Mammary epithelial cell (primary cell): ENCODE measurements at regions of chr3 and their contacts with region 1.

Region 1: DNA sequence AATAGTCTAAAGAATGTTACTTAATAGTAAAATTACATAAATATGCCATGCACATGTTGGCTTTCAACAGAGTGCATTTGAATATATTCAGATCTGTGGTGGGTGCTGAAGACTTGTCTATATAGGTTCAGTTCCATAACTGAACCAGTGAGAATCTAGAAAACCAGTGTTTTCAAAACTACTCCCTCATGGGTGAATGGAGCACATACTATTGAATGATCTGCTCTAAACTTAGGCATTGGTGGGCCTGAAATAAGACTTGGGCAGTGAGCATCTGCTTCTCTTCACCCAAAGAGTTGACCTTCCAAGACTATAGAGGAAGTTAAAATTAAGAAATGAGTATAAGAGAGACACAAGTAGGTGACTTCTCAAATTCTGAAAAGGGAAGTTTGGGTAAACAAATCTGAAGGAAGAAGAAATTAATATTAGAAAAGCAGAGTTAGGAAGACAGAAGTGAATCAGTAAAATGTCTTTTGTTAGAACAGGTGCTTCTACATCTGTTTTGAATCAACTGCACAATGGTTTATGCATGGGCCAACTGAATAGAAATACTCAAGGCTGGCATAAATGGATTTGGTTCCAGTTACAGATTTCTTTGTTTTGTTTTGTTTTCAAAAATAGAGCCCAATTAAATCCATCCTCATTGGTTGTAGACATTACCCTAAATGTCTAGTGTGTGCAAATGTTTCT is 19.3 kb downstream of the ALCAM start:
- DNase-seq: no peak
- H3K4me3 ChIP-seq: no peak overlapping the region
- H3K27ac ChIP-seq: peak overlapping the region; percentile 83
- H3K4me1 ChIP-seq: peaks cover 14% of the 10 kb centered on the region
- H3K27me3 ChIP-seq: no peaks in the 10 kb centered on the region
- CTCF ChIP-seq: no peak

Region 2: DNA sequence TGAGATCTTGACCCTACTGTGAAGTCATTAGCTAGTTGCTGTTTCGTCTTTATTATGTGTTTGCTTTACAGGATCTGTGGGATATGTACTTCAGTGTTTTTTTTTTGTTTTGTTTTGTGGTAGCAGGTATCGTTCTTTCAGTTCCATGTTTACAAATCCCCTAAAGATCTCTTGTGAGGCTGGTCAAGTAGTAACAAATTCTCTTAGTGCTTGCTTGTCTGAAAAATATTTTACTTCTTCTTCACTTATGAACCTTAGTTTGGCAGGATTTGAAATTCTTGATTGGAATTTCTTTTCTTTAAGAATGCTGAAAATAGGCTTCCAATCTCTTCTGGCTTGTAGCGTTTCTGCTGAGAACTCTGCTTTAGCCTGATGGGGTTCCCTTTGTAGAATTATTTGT is 255.1 kb before region 1 on chr3:
- CTCF ChIA-PET with region 1: no interaction called
- dilution Hi-C with region 1: no loop called
- in situ Hi-C with region 1: no loop called
- intact Hi-C with region 1: no loop called
- DNase-seq: no peak
- H3K4me3 ChIP-seq: no peak overlapping the region
- H3K27ac ChIP-seq: no peak overlapping the region
- H3K4me1 ChIP-seq: no peaks in the 10 kb centered on the region
- H3K27me3 ChIP-seq: no peaks in the 10 kb centered on the region
- CTCF ChIP-seq: no peak

Region 3: GRCh38 chr3:105436687-105437086 is 50.7 kb after region 1 on chr3:
- CTCF ChIA-PET with region 1: no interaction called
- dilution Hi-C with region 1: no loop called
- in situ Hi-C with region 1: no loop called
- intact Hi-C with region 1: loop called (anchors 5 kb)
- DNase-seq: no peak
- H3K4me3 ChIP-seq: no peak overlapping the region
- H3K27ac ChIP-seq: no peak overlapping the region
- H3K4me1 ChIP-seq: no peaks in the 10 kb centered on the region
- H3K27me3 ChIP-seq: no peaks in the 10 kb centered on the region
- CTCF ChIP-seq: no peak